ENCODE measurements at regions of chr12 and their contacts with region 1.

Region 1: GRCh38 chr12:46268590-46269558 is at the start of gene SLC38A1:
- DNase-seq: peak; percentile 81 to 96 (median 88)
- ATAC-seq: peak; percentile 65
- H3K4me3 ChIP-seq: peak within 1 kb of the TSS; percentile 90
- H3K4me3 Mint-ChIP-seq: no peak within 1 kb of the TSS
- H3K27ac ChIP-seq: peak within 1 kb of the TSS; percentile 96 to 99
- H3K27ac Mint-ChIP-seq: no peak within 1 kb of the TSS
- H3K4me1 ChIP-seq: peaks cover 41% of the 10 kb centered on the region
- H3K4me1 Mint-ChIP-seq: peaks cover 43% of the 10 kb centered on the region
- H3K27me3 ChIP-seq: no peaks in the 10 kb centered on the region
- H3K27me3 Mint-ChIP-seq: no peaks in the 10 kb centered on the region
- CTCF ChIP-seq: no peak
- total RNA-seq, gene SLC38A1: 327 to 346 TPM

Region 2: DNA sequence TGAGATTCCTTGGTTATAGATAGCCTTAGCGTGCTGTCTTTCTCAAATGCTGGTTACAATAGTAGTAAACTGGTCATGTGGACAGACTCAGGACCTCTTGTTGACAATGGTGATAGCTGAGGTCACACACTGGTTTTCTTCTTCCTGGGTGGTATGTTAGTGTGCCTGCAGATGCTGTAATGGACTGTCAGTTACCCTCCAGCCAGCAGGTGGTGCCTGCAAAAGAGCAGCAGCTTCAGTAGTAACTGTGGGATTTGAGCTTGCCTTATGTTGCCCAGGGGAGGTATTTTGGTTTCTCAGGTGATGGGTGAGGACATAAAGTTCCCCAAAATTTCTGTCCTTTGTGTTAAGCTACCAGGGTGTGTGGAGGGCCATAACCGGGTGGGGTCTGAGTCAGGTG is 244.8 kb before region 1 on chr12:
- CTCF ChIA-PET with region 1: no interaction called
- POLR2A ChIA-PET with region 1: no interaction called
- intact Hi-C with region 1: no loop called
- DNase-seq: no peak
- ATAC-seq: no peak
- H3K4me3 ChIP-seq: no peak overlapping the region
- H3K4me3 Mint-ChIP-seq: no peak overlapping the region
- H3K27ac ChIP-seq: no peak overlapping the region
- H3K27ac Mint-ChIP-seq: no peak overlapping the region
- H3K4me1 ChIP-seq: no peaks in the 10 kb centered on the region
- H3K4me1 Mint-ChIP-seq: no peaks in the 10 kb centered on the region
- H3K27me3 ChIP-seq: no peaks in the 10 kb centered on the region
- H3K27me3 Mint-ChIP-seq: peaks cover 32% of the 10 kb centered on the region
- CTCF ChIP-seq: no peak

Region 3: GRCh38 chr12:46124848-46125619 is 143.8 kb before region 1 on chr12:
- CTCF ChIA-PET with region 1: interaction called, 4 read pairs
- POLR2A ChIA-PET with region 1: interaction called, 20 read pairs
- intact Hi-C with region 1: no loop called
- DNase-seq: peak in 13 of 14 experiments; percentile 16 to 87 (median 46)
- ATAC-seq: peak; percentile 97
- H3K4me3 ChIP-seq: no peak overlapping the region
- H3K4me3 Mint-ChIP-seq: peak overlapping the region; percentile 39
- H3K27ac ChIP-seq: no peak overlapping the region
- H3K27ac Mint-ChIP-seq: peak overlapping the region; percentile 62
- H3K4me1 ChIP-seq: no peaks in the 10 kb centered on the region
- H3K4me1 Mint-ChIP-seq: peaks cover 7% of the 10 kb centered on the region
- H3K27me3 ChIP-seq: no peaks in the 10 kb centered on the region
- H3K27me3 Mint-ChIP-seq: peaks cover 4% of the 10 kb centered on the region
- CTCF ChIP-seq: peak; percentile 49

Region 4: DNA sequence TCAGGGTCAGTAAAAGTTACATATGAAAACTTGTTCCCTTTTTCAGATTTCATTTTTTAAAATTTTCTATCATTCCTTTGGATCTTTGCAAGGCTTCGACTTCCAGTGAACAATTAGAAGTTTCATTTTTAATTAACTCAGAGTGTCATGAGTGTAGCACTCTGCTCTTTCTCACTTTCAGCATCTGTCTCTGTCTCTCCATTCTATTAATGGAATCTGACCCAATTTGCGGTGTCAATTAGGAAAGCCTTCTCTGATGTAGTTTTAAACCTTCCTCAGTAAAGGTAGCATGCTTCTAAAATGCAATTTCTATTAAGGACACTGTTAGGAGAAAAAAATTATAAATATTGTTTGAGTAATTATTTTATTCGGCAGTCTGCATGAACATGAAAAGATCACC is 68.3 kb before region 1 on chr12:
- CTCF ChIA-PET with region 1: interaction called, 4 read pairs
- POLR2A ChIA-PET with region 1: interaction called, 89 read pairs
- intact Hi-C with region 1: no loop called
- DNase-seq: no peak
- ATAC-seq: no peak
- H3K4me3 ChIP-seq: no peak overlapping the region
- H3K4me3 Mint-ChIP-seq: no peak overlapping the region
- H3K27ac ChIP-seq: no peak overlapping the region
- H3K27ac Mint-ChIP-seq: no peak overlapping the region
- H3K4me1 ChIP-seq: no peaks in the 10 kb centered on the region
- H3K4me1 Mint-ChIP-seq: peaks cover 53% of the 10 kb centered on the region
- H3K27me3 ChIP-seq: no peaks in the 10 kb centered on the region
- H3K27me3 Mint-ChIP-seq: no peaks in the 10 kb centered on the region
- CTCF ChIP-seq: no peak

Region 5: DNA sequence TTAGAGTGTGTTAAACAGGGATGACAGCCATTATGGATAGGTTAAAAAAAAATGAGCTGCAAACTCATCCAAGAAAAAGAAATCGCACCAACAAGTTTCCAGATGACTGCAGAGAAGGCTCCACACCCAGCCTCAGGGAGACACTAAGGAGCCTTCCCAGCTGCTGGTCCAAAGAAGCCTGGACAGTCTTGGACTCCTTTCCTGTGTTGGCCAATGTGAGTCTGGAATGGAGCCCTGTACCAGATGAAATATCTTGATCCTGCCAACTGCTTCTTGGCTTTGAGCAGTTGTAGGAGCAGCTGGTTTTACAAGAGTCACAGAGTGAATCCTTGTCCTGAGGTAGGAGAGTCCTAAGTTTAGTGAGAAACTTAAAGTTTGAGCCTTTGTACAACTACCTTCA is 44.5 kb before region 1 on chr12:
- CTCF ChIA-PET with region 1: no interaction called
- POLR2A ChIA-PET with region 1: interaction called, 418 read pairs
- intact Hi-C with region 1: loop called in 1 of 2 experiments (anchors 5 kb)
- DNase-seq: no peak
- ATAC-seq: no peak
- H3K4me3 ChIP-seq: no peak overlapping the region
- H3K4me3 Mint-ChIP-seq: no peak overlapping the region
- H3K27ac ChIP-seq: peak overlapping the region in 1 of 2 donors; percentile 50
- H3K27ac Mint-ChIP-seq: peak overlapping the region; percentile 96
- H3K4me1 ChIP-seq: peaks cover 49% of the 10 kb centered on the region
- H3K4me1 Mint-ChIP-seq: peaks cover 96% of the 10 kb centered on the region
- H3K27me3 ChIP-seq: no peaks in the 10 kb centered on the region
- H3K27me3 Mint-ChIP-seq: no peaks in the 10 kb centered on the region
- CTCF ChIP-seq: no peak

Region 6: DNA sequence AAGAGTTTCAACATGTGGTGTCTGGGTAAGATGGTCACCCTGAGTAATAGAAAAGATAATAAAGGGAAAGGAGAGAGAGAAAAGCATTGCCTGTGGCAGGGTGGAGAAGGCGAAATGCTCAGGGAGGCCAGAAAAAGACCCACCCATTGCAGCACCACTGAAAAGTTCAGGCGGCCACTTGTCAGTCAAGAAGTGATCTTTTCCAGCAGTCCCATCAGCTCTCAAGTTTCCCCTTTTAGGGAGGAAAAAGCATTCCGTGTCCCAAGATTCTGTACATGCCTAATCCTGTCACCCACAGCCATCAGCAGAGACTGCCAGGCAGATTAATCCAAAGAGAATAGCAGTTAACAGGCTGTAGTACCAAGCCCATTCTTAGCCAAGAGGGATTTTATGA is 12.0 kb before region 1 on chr12:
- CTCF ChIA-PET with region 1: interaction called, 6 read pairs
- POLR2A ChIA-PET with region 1: interaction called, 11 read pairs
- intact Hi-C with region 1: no loop called
- DNase-seq: no peak
- ATAC-seq: no peak
- H3K4me3 ChIP-seq: no peak overlapping the region
- H3K4me3 Mint-ChIP-seq: peak overlapping the region; percentile 11
- H3K27ac ChIP-seq: no peak overlapping the region
- H3K27ac Mint-ChIP-seq: peak overlapping the region; percentile 70
- H3K4me1 ChIP-seq: peaks cover 58% of the 10 kb centered on the region
- H3K4me1 Mint-ChIP-seq: peaks cover 62% of the 10 kb centered on the region
- H3K27me3 ChIP-seq: no peaks in the 10 kb centered on the region
- H3K27me3 Mint-ChIP-seq: no peaks in the 10 kb centered on the region
- CTCF ChIP-seq: no peak

Region 7: GRCh38 chr12:46357438-46358324 is 88.8 kb after region 1 on chr12:
- CTCF ChIA-PET with region 1: no interaction called
- POLR2A ChIA-PET with region 1: interaction called, 14 read pairs
- intact Hi-C with region 1: no loop called
- DNase-seq: no peak
- ATAC-seq: no peak
- H3K4me3 ChIP-seq: no peak overlapping the region
- H3K4me3 Mint-ChIP-seq: no peak overlapping the region
- H3K27ac ChIP-seq: no peak overlapping the region
- H3K27ac Mint-ChIP-seq: peak overlapping the region; percentile 75
- H3K4me1 ChIP-seq: no peaks in the 10 kb centered on the region
- H3K4me1 Mint-ChIP-seq: peaks cover 41% of the 10 kb centered on the region
- H3K27me3 ChIP-seq: no peaks in the 10 kb centered on the region
- H3K27me3 Mint-ChIP-seq: no peaks in the 10 kb centered on the region
- CTCF ChIP-seq: no peak

Measured in CD4-positive, alpha-beta T cell (primary cell).